ENCODE measurements at regions of chr4 and their contacts with region 1.

Region 1: GRCh38 chr4:159206427-159206871 is 103.6 kb downstream of the RAPGEF2 start:
- DNase-seq: peak; percentile 84
- H3K4me3 Mint-ChIP-seq: peak overlapping the region; percentile 44
- H3K27ac Mint-ChIP-seq: peak overlapping the region; percentile 97
- H3K4me1 Mint-ChIP-seq: peaks cover 54% of the 10 kb centered on the region
- H3K27me3 Mint-ChIP-seq: no peaks in the 10 kb centered on the region

Region 2: DNA sequence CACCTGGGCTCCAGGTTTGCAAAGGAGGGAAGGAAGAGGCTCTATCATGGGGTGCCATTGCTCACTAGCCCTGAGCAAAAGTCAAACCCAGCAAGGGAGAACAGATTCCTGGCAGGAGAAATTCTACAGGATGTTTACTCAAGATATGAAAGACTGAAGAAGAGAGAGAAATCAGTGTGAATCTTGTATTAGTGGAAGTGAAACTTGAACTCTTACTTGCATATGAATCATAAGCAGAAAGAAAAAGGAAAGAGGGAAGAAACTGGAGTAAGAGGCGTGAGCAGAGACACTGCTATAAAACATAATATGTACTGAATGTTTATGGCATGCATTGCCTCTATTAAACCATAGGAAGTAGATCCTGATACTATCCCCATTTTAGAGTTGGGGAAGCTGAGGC is 595.7 kb before region 1 on chr4:
- CTCF ChIA-PET with region 1: no interaction called
- intact Hi-C with region 1: loop called (anchors 2 kb)
- DNase-seq: peak; percentile 15
- H3K4me3 Mint-ChIP-seq: no peak overlapping the region
- H3K27ac Mint-ChIP-seq: no peak overlapping the region
- H3K4me1 Mint-ChIP-seq: peaks cover 6% of the 10 kb centered on the region
- H3K27me3 Mint-ChIP-seq: peaks cover 21% of the 10 kb centered on the region

Region 3: DNA sequence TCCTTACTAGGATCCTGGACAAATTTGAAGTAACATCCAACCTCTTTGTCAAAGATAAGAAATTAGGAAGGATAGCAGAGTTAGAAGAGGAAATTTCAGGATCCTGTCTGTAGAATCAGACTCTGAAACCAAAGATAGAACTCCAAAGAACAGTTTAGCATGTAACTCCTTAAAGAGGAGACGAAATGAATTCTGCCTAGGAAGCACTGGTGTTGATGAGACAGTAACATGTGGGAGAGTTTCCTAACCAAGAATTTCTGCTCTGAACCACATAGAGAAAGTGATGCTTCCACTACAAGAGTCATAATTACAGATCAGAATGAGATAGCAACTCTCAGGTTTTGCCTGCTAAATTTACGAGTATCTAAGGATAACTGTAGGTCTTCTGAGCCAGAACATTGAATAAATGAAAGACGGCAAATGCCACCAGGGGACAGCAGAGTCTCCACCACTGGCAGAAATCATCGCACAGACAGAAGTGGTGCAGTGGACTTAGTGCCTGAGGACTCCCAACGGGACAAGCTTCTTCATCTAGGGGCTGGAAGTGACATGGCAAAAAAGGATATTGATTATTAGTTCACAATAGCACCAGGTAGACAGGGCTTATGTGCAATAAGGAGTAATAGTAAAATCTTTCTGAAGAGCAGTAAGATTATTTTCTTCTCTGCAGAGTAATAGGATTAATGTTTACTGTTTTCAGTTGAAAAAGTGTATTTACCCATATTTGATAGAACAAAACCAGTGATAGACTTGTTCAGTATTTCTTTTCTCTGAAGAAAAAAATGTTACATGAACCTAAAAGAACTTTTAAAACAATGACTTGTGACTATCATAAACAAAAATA is 476.5 kb before region 1 on chr4:
- CTCF ChIA-PET with region 1: interaction called, 11 read pairs
- intact Hi-C with region 1: loop called (anchors 1 kb)
- DNase-seq: peak; percentile 73
- H3K4me3 Mint-ChIP-seq: no peak overlapping the region
- H3K27ac Mint-ChIP-seq: no peak overlapping the region
- H3K4me1 Mint-ChIP-seq: peaks cover 4% of the 10 kb centered on the region
- H3K27me3 Mint-ChIP-seq: peaks cover 26% of the 10 kb centered on the region

Region 4: GRCh38 chr4:159077702-159078495 is 128.6 kb before region 1 on chr4:
- CTCF ChIA-PET with region 1: no interaction called
- intact Hi-C with region 1: loop called (anchors 1 kb)
- DNase-seq: no peak
- H3K4me3 Mint-ChIP-seq: no peak overlapping the region
- H3K27ac Mint-ChIP-seq: peak overlapping the region; percentile 34
- H3K4me1 Mint-ChIP-seq: peaks cover 28% of the 10 kb centered on the region
- H3K27me3 Mint-ChIP-seq: no peaks in the 10 kb centered on the region

Region 5: GRCh38 chr4:159175085-159175988 is 31.1 kb before region 1 on chr4:
- CTCF ChIA-PET with region 1: interaction called, 11 read pairs
- intact Hi-C with region 1: loop called (anchors 1 kb)
- DNase-seq: peak; percentile 76
- H3K4me3 Mint-ChIP-seq: peak overlapping the region; percentile 44
- H3K27ac Mint-ChIP-seq: no peak overlapping the region
- H3K4me1 Mint-ChIP-seq: peaks cover 75% of the 10 kb centered on the region
- H3K27me3 Mint-ChIP-seq: peaks cover 3% of the 10 kb centered on the region

Region 6: DNA sequence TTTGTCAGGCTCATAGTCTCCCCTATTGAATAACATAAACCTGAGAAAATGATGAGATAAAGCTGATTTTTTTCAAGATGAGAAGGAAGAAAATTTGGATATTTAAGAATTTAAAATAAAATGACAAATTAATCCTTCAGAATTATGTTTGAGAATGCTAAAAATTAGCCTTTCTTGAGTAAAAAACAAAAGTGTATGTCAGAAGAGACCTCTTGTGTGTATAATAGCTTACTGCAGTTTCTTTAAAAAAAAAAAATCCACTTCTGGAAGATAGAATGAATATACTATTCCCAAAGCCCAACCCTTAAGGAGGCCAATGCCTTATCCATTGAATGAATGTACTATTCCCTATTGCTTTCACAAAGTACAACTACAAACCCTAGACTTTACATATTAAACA is 178.2 kb after region 1 on chr4:
- CTCF ChIA-PET with region 1: no interaction called
- intact Hi-C with region 1: loop called (anchors 5 kb)
- DNase-seq: no peak
- H3K4me3 Mint-ChIP-seq: no peak overlapping the region
- H3K27ac Mint-ChIP-seq: no peak overlapping the region
- H3K4me1 Mint-ChIP-seq: no peaks in the 10 kb centered on the region
- H3K27me3 Mint-ChIP-seq: peaks cover 28% of the 10 kb centered on the region

Region 7: DNA sequence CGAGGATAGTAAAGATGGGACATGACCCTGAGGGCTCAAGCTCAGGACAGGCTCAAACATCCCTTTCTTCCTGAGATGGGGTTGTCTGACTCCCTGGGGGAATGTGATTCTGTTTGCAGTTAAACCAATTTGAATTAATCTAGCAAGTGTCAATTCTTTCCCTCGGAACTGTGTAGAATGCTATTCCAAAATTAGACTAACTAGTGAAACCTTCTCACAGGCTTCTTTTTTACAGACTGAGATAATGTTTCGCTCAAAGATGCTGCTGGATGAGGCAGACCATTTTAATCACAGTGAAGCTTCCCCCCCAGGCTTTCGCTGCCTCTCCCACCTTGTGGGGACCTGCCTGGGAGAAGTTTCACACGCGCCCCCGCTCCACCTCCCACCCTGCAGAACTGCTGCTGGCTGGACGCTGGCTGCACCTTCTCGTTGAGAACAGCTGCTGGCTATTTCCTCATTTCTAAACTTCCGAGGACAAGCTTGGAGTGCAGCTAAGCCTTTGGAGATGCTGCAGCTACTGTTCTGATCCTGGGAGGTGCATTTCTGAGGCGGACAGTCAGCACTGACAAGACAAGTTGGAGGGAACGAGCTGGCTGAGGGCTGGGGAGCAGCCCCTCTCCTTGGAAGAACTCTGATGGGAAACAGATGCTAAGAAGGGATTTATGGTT is 194.2 kb after region 1 on chr4:
- CTCF ChIA-PET with region 1: no interaction called
- intact Hi-C with region 1: no loop called
- DNase-seq: no peak
- H3K4me3 Mint-ChIP-seq: no peak overlapping the region
- H3K27ac Mint-ChIP-seq: no peak overlapping the region
- H3K4me1 Mint-ChIP-seq: no peaks in the 10 kb centered on the region
- H3K27me3 Mint-ChIP-seq: peaks cover 12% of the 10 kb centered on the region